Natural killer cell (primary cell): ENCODE measurements at regions of chr4 and their contacts with region 1.

Region 1: DNA sequence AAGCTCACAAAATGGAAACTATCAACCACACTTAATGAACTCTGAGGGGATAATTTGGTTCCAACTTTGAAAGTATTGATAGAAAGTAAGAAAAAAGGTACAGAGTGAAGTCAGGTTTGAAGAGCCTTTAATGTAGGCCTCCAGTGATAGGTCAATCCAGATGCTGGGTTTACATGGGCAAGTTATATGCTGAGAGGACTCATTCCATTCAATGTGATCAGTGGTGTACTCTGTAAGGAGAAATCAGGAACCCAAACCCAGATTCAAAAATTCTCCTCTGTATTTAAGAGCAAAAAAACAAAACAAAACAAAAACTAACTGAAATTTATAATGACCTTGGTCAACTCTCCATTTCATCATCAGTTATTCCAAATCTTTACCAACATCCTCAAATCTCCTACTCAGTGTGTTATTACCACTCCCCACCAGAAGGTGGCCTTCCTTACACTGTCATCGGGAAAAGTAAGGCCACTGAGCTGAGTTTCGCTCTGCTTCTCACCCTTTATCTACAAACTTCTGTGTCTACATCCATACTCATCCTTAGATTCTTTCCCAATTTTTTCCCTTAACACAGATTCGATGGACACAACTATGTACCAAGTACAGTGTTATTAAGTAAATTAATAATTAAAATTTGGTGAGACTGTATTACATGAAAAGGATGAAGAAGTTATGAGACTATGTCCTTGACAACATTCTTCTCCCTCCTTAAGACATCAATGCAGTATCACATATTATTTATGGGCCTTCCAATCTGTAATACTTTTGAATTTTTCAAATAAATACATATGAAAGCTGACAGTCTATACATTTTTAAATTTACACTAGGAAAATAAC is 88.3 kb downstream of the ZAR1 start:
- DNase-seq: peak in 1 of 2 donors; percentile 82
- ATAC-seq: peak; percentile 81 to 97 (median 93)
- H3K4me3 ChIP-seq: no peak overlapping the region
- H3K4me3 Mint-ChIP-seq: no peak overlapping the region
- H3K27ac ChIP-seq: no peak overlapping the region
- H3K27ac Mint-ChIP-seq: peak overlapping the region; percentile 17 to 49
- H3K4me1 ChIP-seq: no peaks in the 10 kb centered on the region
- H3K4me1 Mint-ChIP-seq: no peaks in the 10 kb centered on the region
- H3K27me3 ChIP-seq: no peaks in the 10 kb centered on the region
- H3K27me3 Mint-ChIP-seq: no peaks in the 10 kb centered on the region
- CTCF ChIP-seq: peak; percentile 91

Region 2: GRCh38 chr4:48518143-48518542 is 60.2 kb before region 1 on chr4:
- intact Hi-C with region 1: no loop called
- DNase-seq: no peak
- ATAC-seq: no peak
- H3K4me3 ChIP-seq: no peak overlapping the region
- H3K4me3 Mint-ChIP-seq: no peak overlapping the region
- H3K27ac ChIP-seq: no peak overlapping the region
- H3K27ac Mint-ChIP-seq: peak overlapping the region in 1 of 2 donors; percentile 1
- H3K4me1 ChIP-seq: no peaks in the 10 kb centered on the region
- H3K4me1 Mint-ChIP-seq: no peaks in the 10 kb centered on the region
- H3K27me3 ChIP-seq: no peaks in the 10 kb centered on the region
- H3K27me3 Mint-ChIP-seq: no peaks in the 10 kb centered on the region
- CTCF ChIP-seq: no peak

Region 3: DNA sequence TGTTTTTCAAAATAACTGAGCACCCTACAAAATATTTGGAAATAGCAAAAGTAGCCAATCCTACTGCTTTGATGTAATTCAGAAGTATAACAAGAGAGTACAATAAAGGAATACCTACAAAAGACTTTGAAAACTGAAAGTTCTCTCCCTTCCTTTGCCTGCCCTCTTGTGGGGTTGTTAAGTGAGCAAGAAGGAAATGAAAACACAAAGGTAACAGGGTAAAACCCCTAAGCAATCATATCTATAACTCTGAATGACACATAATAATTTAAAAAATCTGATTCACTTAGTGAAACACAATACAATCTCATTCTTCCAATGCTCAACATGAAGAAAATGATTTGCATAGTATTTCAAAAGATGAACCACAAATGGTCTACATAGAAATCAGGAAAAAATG is 103.5 kb after region 1 on chr4:
- intact Hi-C with region 1: loop called (anchors 1 kb)
- DNase-seq: peak in 1 of 2 donors; percentile 62
- ATAC-seq: peak in 2 of 3 donors; percentile 60 to 63
- H3K4me3 ChIP-seq: no peak overlapping the region
- H3K4me3 Mint-ChIP-seq: no peak overlapping the region
- H3K27ac ChIP-seq: no peak overlapping the region
- H3K27ac Mint-ChIP-seq: peak overlapping the region; percentile 74 to 77
- H3K4me1 ChIP-seq: no peaks in the 10 kb centered on the region
- H3K4me1 Mint-ChIP-seq: peaks cover 45% of the 10 kb centered on the region in 2 donors
- H3K27me3 ChIP-seq: no peaks in the 10 kb centered on the region
- H3K27me3 Mint-ChIP-seq: no peaks in the 10 kb centered on the region
- CTCF ChIP-seq: peak; percentile 32

Region 4: GRCh38 chr4:48906206-48907173 is 328.1 kb after region 1 on chr4 and contains the start of gene OCIAD2:
- intact Hi-C with region 1: loop called (anchors 1 kb)
- DNase-seq: peak; percentile 63 to 92
- ATAC-seq: peak; percentile 90 to 95 (median 95)
- H3K4me3 ChIP-seq: peak within 1 kb of the TSS; percentile 67
- H3K4me3 Mint-ChIP-seq: peak within 1 kb of the TSS; percentile 96
- H3K27ac ChIP-seq: peak within 1 kb of the TSS; percentile 34
- H3K27ac Mint-ChIP-seq: peak within 1 kb of the TSS; percentile 86 to 98
- H3K4me1 ChIP-seq: peaks cover 15% of the 10 kb centered on the region
- H3K4me1 Mint-ChIP-seq: peaks cover 23 to 26% of the 10 kb centered on the region in 2 donors
- H3K27me3 ChIP-seq: no peaks in the 10 kb centered on the region
- H3K27me3 Mint-ChIP-seq: no peaks in the 10 kb centered on the region
- CTCF ChIP-seq: no peak
- total RNA-seq, gene OCIAD2: 25.8 to 34.3 (median 26.1) TPM

Region 5: GRCh38 chr4:48963042-48963679 is 384.8 kb after region 1 on chr4:
- intact Hi-C with region 1: loop called (anchors 1 kb)
- DNase-seq: peak; percentile 46 to 90
- ATAC-seq: peak; percentile 93 to 99 (median 99)
- H3K4me3 ChIP-seq: no peak overlapping the region
- H3K4me3 Mint-ChIP-seq: no peak overlapping the region
- H3K27ac ChIP-seq: no peak overlapping the region
- H3K27ac Mint-ChIP-seq: no peak overlapping the region
- H3K4me1 ChIP-seq: no peaks in the 10 kb centered on the region
- H3K4me1 Mint-ChIP-seq: no peaks in the 10 kb centered on the region
- H3K27me3 ChIP-seq: no peaks in the 10 kb centered on the region
- H3K27me3 Mint-ChIP-seq: peaks cover 5 to 12% of the 10 kb centered on the region in 2 donors
- CTCF ChIP-seq: peak; percentile 98